Cardiac septum (tissue), 1 donor: ENCODE measurements at regions of chr22 and their contacts with region 1.

Region 1: DNA sequence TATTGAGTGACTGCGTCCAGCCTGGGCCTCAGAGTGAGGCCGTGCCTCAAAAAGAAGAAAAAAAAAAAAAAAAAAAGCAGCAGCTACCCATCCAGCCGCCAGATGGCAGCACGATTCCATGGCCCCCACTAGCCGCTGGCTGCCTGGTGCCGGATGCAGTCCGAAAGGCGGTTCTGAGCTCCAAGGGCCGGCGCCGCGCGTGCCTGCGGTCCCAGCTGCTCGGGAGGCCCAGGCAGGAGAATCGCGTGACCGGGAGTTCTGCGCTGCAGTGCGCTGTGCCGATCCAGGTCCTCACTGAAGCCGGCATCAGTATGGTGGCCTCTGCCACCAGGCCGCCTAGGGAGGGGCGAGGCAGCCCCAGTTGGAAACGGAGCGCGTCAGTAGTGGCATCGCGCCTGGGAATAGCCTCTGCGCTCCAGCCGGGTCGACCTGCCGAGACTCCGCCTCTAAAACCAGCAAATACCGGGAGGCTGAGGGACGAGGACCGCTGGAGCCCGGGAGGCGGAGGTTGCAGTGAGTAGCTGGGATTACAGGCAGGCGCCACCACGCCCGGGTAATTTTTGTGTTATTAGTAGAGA is 19.3 kb downstream of the SCARF2 start:
- DNase-seq: peak; percentile 91

Region 2: DNA sequence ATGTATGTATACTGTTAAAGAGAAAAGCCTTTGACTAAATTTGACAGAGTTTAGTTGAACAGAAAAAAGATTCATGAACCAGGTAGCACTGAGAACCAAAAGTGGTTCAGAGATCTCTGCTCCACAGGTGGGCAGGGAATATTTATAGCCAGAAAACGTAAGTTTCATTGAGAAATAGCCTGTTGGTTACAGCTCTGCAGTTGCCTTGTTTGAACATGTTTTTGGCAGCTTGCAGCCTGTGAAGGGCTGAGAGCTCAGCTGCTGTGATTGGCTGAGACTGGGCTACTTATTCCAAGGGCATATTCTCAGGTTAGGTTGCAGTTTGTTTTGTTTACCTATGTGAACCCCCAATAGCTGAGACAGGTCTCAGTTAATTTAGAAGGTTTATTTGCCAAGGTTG is 37.8 kb before region 1 on chr22:
- intact Hi-C with region 1: no loop called
- DNase-seq: peak; percentile 0

Region 3: DNA sequence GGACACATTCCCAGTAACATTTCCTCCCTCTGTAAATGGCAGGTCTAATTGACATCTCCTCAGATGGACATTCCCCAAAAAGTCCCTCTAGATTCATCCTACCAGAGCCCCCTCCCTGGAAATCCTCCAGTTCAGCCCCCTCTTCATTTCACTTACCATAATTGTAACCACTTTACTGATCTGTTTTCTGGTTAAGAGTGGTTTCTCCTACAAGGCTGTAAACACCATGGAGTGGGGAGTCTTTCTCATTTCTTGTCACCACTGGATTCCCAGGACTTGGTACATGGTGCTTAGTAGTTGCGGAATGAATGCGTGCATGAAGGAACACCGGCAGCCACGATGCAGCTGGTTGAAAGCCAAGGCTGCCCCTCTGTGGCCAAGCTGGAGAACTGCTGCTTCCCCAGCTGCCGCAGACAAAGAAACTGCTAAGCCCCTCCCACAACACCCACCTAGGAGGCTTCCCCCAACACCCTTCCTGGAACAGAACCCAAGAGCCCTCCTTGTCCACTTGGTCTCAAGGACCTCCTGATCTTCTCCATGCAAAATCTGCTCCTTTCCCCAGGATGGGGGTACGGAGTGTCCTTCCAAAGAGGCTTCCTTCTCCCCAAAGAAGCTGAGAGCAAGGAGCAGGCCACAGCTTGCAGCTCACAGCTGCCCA is 37.9 kb after region 1 on chr22:
- intact Hi-C with region 1: loop called (anchors 1 kb)
- DNase-seq: peak; percentile 91

Region 4: GRCh38 chr22:20495861-20496681 is 77.8 kb after region 1 on chr22:
- intact Hi-C with region 1: loop called (anchors 2 kb)
- DNase-seq: peak; percentile 97